ENCODE measurements at regions of chr3 and their contacts with region 1.

Region 1: DNA sequence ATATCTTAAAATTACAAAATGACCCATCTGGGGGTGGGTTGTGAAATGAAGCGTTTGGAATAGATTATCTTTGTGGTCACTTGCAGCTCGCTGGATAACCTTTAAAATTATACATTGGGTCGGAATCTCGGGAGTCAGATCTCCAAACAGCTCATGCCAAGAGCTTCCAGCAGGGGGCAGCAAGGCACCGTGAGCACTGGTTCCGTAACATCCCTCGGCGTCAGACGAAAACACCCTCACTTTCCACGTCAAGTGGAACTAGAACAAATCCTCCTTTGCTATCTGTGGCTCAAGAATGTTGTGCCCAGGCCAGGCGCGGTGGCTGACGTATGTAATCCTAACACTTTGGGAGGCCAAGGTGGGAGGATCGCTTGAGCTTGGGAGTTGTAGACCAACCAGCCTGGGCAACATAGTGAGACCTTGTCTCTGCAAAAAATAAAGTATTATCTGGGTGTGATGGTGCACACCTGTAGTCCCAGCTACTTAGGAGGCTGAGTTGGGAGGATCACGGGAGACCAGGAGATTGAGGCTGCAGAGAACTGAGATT is 31.1 kb downstream of the UMPS start:
- DNase-seq: peak; percentile 89
- ATAC-seq: peak; percentile 91 to 94
- H3K4me3 ChIP-seq: no peak overlapping the region
- H3K27ac ChIP-seq: no peak overlapping the region
- H3K4me1 ChIP-seq: peaks cover 15% of the 10 kb centered on the region
- H3K27me3 ChIP-seq: no peaks in the 10 kb centered on the region
- CTCF ChIP-seq: peak; percentile 91

Region 2: DNA sequence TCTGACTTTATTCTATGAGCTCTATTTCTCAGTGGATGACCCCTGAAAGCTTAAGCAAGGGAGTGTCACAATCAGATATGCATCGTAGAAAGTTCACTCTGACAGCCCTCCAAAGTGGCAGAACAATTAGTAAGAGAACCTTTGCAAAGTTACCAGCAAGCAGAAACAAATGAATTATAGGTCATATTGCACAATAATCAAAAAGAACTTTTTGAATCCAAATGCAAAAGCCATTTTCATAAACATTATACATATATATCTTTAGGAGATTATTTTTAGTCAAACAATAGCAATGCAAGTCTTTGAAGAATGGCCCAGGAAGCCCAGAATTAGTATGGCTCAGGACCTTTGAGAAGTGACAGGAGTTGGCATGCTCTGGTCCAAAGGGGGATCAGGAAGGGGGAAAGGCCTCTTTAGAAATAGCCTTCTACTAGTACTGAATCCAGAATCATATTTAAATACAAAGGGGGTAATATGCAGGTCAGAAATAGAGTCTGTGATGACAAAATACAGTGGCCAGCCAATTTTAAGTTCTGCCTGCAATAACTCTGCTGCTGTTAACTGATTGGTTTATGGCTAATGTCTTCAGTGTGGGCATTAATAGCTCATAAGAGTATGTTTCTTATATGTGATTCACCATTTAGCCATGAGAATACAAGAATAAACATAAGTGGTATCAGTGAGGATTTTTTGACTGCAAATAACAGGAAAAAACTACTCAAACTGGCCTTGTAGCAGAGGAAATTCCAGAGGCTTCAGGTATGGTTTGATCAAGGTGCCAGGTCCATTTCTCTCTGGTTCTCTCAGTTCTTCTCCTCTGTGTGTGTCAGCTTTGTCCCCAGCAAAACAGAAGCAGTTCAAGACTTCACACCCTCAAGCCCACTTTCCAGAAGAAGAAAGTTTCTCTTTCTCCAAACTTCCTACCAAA is 142.8 kb after region 1 on chr3:
- intact Hi-C with region 1: loop called (anchors 5 kb)
- DNase-seq: no peak
- ATAC-seq: no peak
- H3K4me3 ChIP-seq: no peak overlapping the region
- H3K27ac ChIP-seq: no peak overlapping the region
- H3K4me1 ChIP-seq: peaks cover 8% of the 10 kb centered on the region
- H3K27me3 ChIP-seq: no peaks in the 10 kb centered on the region
- CTCF ChIP-seq: no peak

Region 3: GRCh38 chr3:125129512-125129962 is 368.2 kb after region 1 on chr3:
- intact Hi-C with region 1: no loop called
- DNase-seq: no peak
- ATAC-seq: peak; percentile 56 to 66
- H3K4me3 ChIP-seq: no peak overlapping the region
- H3K27ac ChIP-seq: peak overlapping the region; percentile 71
- H3K4me1 ChIP-seq: peaks cover 37% of the 10 kb centered on the region
- H3K27me3 ChIP-seq: no peaks in the 10 kb centered on the region
- CTCF ChIP-seq: no peak